CD8-positive, alpha-beta T cell (primary cell): ENCODE measurements at regions of chr11 and their contacts with region 1.

Region 1: GRCh38 chr11:2420502-2421225 is 20.1 kb downstream of the TSSC4 start:
- DNase-seq: peak; percentile 52 to 86 (median 69)
- ATAC-seq: peak; percentile 94
- H3K4me3 ChIP-seq: no peak overlapping the region
- H3K4me3 Mint-ChIP-seq: no peak overlapping the region
- H3K27ac ChIP-seq: no peak overlapping the region
- H3K27ac Mint-ChIP-seq: no peak overlapping the region
- H3K4me1 ChIP-seq: peaks cover 14% of the 10 kb centered on the region
- H3K4me1 Mint-ChIP-seq: peaks cover 4% of the 10 kb centered on the region
- H3K27me3 ChIP-seq: peaks cover 0 to 3% of the 10 kb centered on the region in 2 experiments
- H3K27me3 Mint-ChIP-seq: no peaks in the 10 kb centered on the region
- CTCF ChIP-seq: peak; percentile 83

Region 2: DNA sequence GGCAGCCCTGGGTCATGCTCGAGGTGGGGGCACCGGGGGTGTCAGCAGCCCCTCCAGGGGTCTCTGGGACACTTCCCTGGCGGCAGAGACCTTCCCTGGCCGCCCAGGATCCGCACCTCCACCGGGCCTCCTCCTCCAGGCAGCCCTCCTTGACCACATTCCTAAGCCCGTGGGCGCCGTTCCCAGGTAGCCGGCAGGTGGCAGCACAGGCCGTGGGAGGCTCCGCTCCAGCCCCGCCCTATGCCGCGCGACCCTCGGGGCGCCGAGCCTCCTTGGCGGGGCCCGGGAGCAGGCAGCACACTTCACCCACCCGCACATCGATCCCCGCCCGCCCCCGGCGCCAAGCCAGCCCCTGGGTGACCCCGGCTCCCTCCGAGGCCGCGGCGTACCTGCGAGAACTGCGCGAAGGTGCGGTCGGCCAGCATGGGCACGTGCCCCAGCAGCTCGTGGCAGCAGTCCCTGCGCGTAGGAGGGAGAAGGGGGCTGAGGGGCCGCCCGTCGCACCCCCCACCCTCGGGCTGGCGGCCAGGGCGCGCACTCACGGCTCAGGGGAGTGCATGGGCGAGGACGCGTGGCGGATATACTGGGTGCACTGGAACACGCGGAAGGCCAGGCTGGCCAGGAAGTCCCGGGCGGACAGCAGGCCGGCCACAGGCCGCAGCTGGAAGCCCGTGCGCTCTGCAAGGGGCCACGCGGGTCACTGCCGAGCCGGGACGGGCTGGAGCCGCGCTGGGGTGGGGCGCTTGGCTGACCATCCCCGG is 254.4 kb before region 1 on chr11:
- CTCF ChIA-PET with region 1: interaction called, 26 read pairs
- POLR2A ChIA-PET with region 1: interaction called, 5 read pairs
- intact Hi-C with region 1: loop called in 1 of 2 experiments (anchors 1 kb)
- DNase-seq: peak in 6 of 9 experiments; percentile 21 to 63 (median 56)
- ATAC-seq: peak; percentile 73
- H3K4me3 ChIP-seq: no peak overlapping the region
- H3K4me3 Mint-ChIP-seq: no peak overlapping the region
- H3K27ac ChIP-seq: no peak overlapping the region
- H3K27ac Mint-ChIP-seq: no peak overlapping the region
- H3K4me1 ChIP-seq: no peaks in the 10 kb centered on the region
- H3K4me1 Mint-ChIP-seq: no peaks in the 10 kb centered on the region
- H3K27me3 ChIP-seq: no peaks in the 10 kb centered on the region
- H3K27me3 Mint-ChIP-seq: peaks cover 13% of the 10 kb centered on the region
- CTCF ChIP-seq: peak; percentile 41

Region 3: DNA sequence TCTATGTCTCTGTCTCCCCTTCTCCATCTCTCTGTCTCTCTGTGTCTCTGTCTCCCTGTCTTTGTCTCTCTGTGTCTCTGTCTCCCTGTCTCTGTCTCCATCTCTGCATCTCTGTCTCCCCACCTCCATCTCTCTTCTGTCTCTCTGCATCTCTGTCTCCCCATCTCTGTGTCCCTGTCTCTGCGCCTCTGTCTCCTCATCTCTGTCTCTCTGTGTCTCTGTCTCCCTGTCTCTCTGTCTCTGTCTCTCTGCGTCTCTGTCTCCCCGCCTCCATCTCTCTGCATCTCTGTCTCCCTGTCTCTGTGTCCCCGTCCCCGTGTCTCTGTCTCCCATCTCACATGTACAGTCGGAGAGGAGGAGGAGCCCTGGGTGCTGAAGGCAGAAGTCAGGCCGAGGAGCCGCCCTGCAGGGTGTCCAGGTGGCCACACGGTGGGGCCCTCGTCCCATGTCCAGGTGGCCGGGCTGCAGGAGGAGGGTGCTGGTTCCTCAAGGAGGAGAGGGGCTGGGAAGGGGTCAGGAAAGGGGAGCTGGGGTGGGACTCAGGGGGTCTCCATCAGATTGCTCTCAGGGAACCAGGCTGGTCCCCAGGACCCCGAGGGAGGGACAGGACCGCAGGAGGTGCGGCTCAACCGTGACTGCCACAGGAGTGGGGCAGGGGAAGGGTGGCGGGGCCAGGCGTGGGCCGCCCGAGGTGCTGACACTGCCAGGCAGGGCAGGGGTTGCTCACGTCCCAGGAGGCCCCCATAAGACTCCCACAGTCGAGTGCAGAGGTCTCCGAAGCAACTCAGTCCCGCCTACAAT is 223.5 kb before region 1 on chr11:
- CTCF ChIA-PET with region 1: interaction called, 116 read pairs
- POLR2A ChIA-PET with region 1: no interaction called
- intact Hi-C with region 1: loop called in 1 of 2 experiments (anchors 1 kb)
- DNase-seq: peak; percentile 51 to 87 (median 73)
- ATAC-seq: peak; percentile 93
- H3K4me3 ChIP-seq: no peak overlapping the region
- H3K4me3 Mint-ChIP-seq: no peak overlapping the region
- H3K27ac ChIP-seq: no peak overlapping the region
- H3K27ac Mint-ChIP-seq: no peak overlapping the region
- H3K4me1 ChIP-seq: peaks cover 14% of the 10 kb centered on the region
- H3K4me1 Mint-ChIP-seq: peaks cover 12% of the 10 kb centered on the region
- H3K27me3 ChIP-seq: peaks cover 0 to 3% of the 10 kb centered on the region in 2 experiments
- H3K27me3 Mint-ChIP-seq: peaks cover 6% of the 10 kb centered on the region
- CTCF ChIP-seq: peak; percentile 57

Region 4: DNA sequence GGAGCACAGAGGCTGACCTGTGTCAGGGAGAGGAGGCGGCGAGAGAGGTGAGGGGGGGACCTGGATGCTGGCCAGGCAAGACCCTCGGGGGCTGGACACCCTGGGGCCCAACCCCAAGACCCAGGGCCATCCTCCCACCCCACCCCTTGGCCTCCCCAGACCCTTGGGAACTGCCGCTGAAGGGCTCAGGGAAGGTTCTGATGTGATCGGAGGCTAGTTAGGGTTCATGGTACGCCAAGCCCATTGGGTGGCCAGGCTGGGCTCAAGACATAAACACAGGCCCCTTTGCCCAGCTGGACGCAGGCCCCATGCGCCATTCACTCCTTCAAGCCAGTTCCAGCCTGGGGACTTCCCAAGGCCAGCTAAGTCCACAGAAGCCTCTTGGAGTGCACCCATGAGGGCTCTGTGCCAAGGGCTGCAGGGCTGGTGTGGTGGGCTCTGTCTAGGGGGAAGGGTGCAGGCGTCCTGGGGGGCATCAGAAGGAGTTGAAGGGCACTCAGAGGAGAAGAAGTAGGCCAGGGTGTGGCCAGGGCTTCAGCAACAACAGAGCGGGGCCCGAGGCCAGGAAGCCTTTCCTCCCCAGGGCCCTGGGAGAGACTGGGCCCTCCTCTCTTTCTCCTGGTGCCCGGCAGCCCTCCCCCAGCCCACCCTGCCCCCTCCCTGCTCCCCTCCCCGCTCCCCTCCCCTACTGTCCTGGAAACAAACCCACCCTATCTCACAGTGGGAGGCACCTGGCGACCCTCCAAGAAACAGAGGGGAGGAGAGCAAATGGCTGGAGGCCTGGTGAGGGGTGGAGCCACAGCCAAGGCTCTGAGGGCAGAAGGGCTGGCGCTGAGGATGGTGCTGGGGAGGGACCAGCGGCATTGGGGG is 105.9 kb before region 1 on chr11:
- CTCF ChIA-PET with region 1: interaction called, 46 read pairs
- POLR2A ChIA-PET with region 1: interaction called, 3 read pairs
- intact Hi-C with region 1: no loop called
- DNase-seq: peak in 1 of 9 experiments; percentile 7
- ATAC-seq: no peak
- H3K4me3 ChIP-seq: no peak overlapping the region
- H3K4me3 Mint-ChIP-seq: no peak overlapping the region
- H3K27ac ChIP-seq: no peak overlapping the region
- H3K27ac Mint-ChIP-seq: peak overlapping the region; percentile 60
- H3K4me1 ChIP-seq: peaks cover 41% of the 10 kb centered on the region
- H3K4me1 Mint-ChIP-seq: peaks cover 25% of the 10 kb centered on the region
- H3K27me3 ChIP-seq: no peaks in the 10 kb centered on the region
- H3K27me3 Mint-ChIP-seq: no peaks in the 10 kb centered on the region
- CTCF ChIP-seq: no peak

Region 5: GRCh38 chr11:2409611-2410468 is 10.8 kb before region 1 on chr11:
- CTCF ChIA-PET with region 1: interaction called, 42 read pairs
- POLR2A ChIA-PET with region 1: no interaction called
- intact Hi-C with region 1: no loop called
- DNase-seq: no peak
- ATAC-seq: no peak
- H3K4me3 ChIP-seq: no peak overlapping the region
- H3K4me3 Mint-ChIP-seq: no peak overlapping the region
- H3K27ac ChIP-seq: no peak overlapping the region
- H3K27ac Mint-ChIP-seq: no peak overlapping the region
- H3K4me1 ChIP-seq: no peaks in the 10 kb centered on the region
- H3K4me1 Mint-ChIP-seq: no peaks in the 10 kb centered on the region
- H3K27me3 ChIP-seq: no peaks in the 10 kb centered on the region
- H3K27me3 Mint-ChIP-seq: no peaks in the 10 kb centered on the region
- CTCF ChIP-seq: no peak

Region 6: GRCh38 chr11:2653930-2654739 is 233.5 kb after region 1 on chr11:
- CTCF ChIA-PET with region 1: no interaction called
- POLR2A ChIA-PET with region 1: no interaction called
- intact Hi-C with region 1: no loop called
- DNase-seq: no peak
- ATAC-seq: no peak
- H3K4me3 ChIP-seq: no peak overlapping the region
- H3K4me3 Mint-ChIP-seq: no peak overlapping the region
- H3K27ac ChIP-seq: no peak overlapping the region
- H3K27ac Mint-ChIP-seq: no peak overlapping the region
- H3K4me1 ChIP-seq: no peaks in the 10 kb centered on the region
- H3K4me1 Mint-ChIP-seq: no peaks in the 10 kb centered on the region
- H3K27me3 ChIP-seq: peaks cover 0 to 3% of the 10 kb centered on the region in 2 experiments
- H3K27me3 Mint-ChIP-seq: no peaks in the 10 kb centered on the region
- CTCF ChIP-seq: no peak